ENCODE measurements at regions of chr20 and their contacts with region 1.

Region 1: DNA sequence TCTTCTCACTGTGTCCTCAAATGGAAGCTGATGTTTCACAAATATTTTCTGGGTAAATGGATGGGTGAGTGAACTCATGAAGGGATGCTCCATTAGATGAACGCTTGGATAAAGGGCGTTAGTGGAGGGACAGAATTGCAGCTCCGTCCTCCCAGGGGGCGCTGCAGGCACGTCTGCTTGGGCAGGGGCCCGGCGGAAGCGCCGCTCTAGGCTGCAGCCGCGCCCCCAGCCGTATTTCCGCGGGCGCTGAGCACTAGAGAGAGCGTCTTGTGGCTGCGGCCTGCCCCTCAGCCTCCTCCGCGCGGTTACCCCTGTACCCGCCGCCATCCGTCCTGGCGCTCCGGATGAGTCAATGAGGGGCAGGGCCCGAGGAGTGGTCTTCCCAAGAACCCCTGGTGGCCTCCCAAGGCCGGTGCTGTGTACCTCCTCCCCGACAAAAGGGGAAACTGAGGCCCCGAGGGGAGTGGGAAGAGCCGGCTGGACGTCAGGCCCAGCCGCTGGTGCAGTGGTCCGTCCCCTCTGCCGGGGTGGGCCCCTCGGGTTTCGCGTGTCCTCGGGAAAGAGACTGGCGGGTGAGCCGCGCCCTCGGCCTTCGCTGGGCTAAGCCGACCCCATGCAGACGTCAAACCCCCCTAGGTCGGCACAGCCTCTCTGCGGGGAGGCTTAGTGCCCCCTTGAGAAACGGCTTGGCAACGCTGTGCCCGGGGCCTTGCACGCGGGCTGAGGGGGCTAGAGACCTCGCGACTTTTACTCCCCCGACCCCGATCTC is 11.5 kb upstream of the SNHG17 start:
- DNase-seq: peak; percentile 92
- H3K4me3 Mint-ChIP-seq: peak overlapping the region; percentile 72
- H3K27ac Mint-ChIP-seq: peak overlapping the region; percentile 82
- H3K4me1 Mint-ChIP-seq: peaks cover 31% of the 10 kb centered on the region
- H3K27me3 Mint-ChIP-seq: peaks cover 5% of the 10 kb centered on the region

Region 2: DNA sequence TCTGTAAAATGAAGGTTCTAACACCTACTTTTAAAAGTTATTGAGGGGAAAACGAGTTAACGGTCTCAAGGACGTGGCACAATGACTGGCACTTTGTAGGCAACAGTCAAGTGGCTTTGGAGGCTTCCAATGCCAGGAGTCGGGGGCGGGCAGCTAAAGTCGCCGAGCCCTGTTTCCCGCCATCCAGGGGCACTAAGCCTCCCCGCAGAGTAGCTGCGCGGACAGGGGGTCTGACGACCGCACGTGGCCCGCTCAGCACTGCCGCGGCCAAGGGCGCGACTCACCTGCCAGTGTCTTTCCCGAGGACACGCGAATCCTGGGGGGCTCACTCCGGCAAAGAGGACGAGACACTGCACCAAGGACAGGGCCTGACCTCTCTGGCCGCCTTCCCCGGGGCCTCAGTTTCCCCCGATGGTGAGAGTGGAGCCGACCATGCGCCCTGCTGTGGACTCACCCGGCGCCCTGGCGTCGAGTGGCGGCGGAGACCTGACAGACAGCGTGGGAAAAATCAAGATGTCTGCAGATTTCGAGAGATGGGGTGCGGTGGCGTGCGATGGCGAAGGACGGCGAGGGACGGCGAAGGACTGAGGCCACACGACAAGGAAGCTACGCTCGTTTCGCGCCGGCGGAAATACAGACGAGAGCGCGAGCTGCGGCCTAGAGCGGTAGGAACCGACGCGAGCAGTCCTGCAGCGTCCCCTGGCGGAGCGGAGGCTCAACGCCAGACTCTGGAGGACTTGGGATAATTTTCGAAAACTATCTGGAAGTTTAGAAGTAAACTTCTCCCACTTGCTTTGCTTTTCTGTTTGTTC is 11.7 kb before region 1 on chr20 and contains the start of gene SNHG17:
- CTCF ChIA-PET with region 1: interaction called, 88 read pairs
- POLR2A ChIA-PET with region 1: interaction called, 23 read pairs
- DNase-seq: peak; percentile 90
- H3K4me3 Mint-ChIP-seq: peak within 1 kb of the TSS; percentile 82
- H3K27ac Mint-ChIP-seq: peak within 1 kb of the TSS; percentile 91
- H3K4me1 Mint-ChIP-seq: peaks cover 39% of the 10 kb centered on the region
- H3K27me3 Mint-ChIP-seq: peaks cover 9% of the 10 kb centered on the region
- total RNA-seq, gene SNHG17: 40.7 to 40.8 TPM

Region 3: GRCh38 chr20:38458314-38458713 is 11.7 kb after region 1 on chr20:
- CTCF ChIA-PET with region 1: interaction called, 15 read pairs
- POLR2A ChIA-PET with region 1: no interaction called
- DNase-seq: no peak
- H3K4me3 Mint-ChIP-seq: no peak overlapping the region
- H3K27ac Mint-ChIP-seq: no peak overlapping the region
- H3K4me1 Mint-ChIP-seq: no peaks in the 10 kb centered on the region
- H3K27me3 Mint-ChIP-seq: peaks cover 3% of the 10 kb centered on the region

Region 4: GRCh38 chr20:38466983-38467382 is 20.4 kb after region 1 on chr20:
- CTCF ChIA-PET with region 1: interaction called, 22 read pairs
- POLR2A ChIA-PET with region 1: no interaction called
- DNase-seq: no peak
- H3K4me3 Mint-ChIP-seq: no peak overlapping the region
- H3K27ac Mint-ChIP-seq: no peak overlapping the region
- H3K4me1 Mint-ChIP-seq: peaks cover 5% of the 10 kb centered on the region
- H3K27me3 Mint-ChIP-seq: peaks cover 2% of the 10 kb centered on the region

Region 5: GRCh38 chr20:38472513-38473372 is 26.1 kb after region 1 on chr20 and contains the start of gene RALGAPB:
- CTCF ChIA-PET with region 1: interaction called, 22 read pairs
- POLR2A ChIA-PET with region 1: no interaction called
- DNase-seq: peak; percentile 98
- H3K4me3 Mint-ChIP-seq: peak within 1 kb of the TSS; percentile 82
- H3K27ac Mint-ChIP-seq: peak within 1 kb of the TSS; percentile 86
- H3K4me1 Mint-ChIP-seq: peaks cover 40% of the 10 kb centered on the region
- H3K27me3 Mint-ChIP-seq: peaks cover 2% of the 10 kb centered on the region
- total RNA-seq, gene RALGAPB: 31.1 to 36.7 TPM